Heart right ventricle (tissue), 16 donors: ENCODE measurements at regions of chr20 and their contacts with region 1.

Region 1: GRCh38 chr20:40962730-40963504 is 65.7 kb upstream of the TOP1 start:
- DNase-seq: peak; percentile 62 to 65
- ATAC-seq: peak; percentile 77 to 89 (median 84)
- H3K4me3 ChIP-seq: no peak overlapping the region
- H3K27ac ChIP-seq: no peak overlapping the region
- H3K4me1 ChIP-seq: peaks cover 0 to 15% (median 0%) of the 10 kb centered on the region in 9 donors
- H3K27me3 ChIP-seq: peaks cover 0 to 4% (median 0%) of the 10 kb centered on the region in 7 donors
- CTCF ChIP-seq: peak; percentile 82 to 96 (median 92)

Region 2: DNA sequence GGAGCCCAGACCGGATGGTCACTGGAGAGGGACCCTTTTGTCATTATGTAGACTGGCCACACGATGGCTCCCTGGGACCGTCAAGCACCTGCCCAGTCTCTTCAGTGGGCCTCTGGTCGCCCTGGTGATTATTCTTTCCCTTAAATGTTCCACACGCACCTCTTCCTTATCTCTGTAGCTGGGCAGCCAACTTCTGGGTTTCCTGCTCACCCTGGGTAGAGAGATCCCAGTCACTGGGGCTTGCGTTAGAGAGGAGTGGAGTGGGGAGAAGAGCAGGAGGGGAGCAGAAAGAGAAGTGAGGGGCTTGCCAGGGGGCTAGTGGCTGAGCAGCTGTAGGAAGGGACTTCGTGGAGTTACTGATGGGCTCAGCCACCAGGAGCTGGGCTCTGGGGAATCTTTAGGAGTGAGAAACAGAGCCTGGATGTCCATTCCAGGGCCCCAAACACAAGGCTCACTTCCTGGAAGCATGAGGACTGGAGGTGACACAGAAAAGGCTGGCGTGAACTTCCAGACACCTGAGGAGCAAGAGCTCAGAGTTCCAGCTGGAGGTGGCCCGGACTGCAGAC is 1850.7 kb before region 1 on chr20:
- intact Hi-C with region 1: loop called in 6 of 10 experiments (anchors 2 to 10 kb)
- DNase-seq: peak; percentile 24 to 40
- ATAC-seq: peak; percentile 64 to 90 (median 88)
- H3K4me3 ChIP-seq: no peak overlapping the region
- H3K27ac ChIP-seq: no peak overlapping the region
- H3K4me1 ChIP-seq: peaks cover 0 to 9% (median 0%) of the 10 kb centered on the region in 9 donors
- H3K27me3 ChIP-seq: peaks cover 0 to 53% (median 28%) of the 10 kb centered on the region in 7 donors
- CTCF ChIP-seq: peak; percentile 31 to 74 (median 64)

Region 3: GRCh38 chr20:39880887-39881286 is 1082.0 kb before region 1 on chr20:
- intact Hi-C with region 1: loop called in 6 of 10 experiments (anchors 5 to 10 kb)
- DNase-seq: no peak
- ATAC-seq: no peak
- H3K4me3 ChIP-seq: no peak overlapping the region
- H3K27ac ChIP-seq: no peak overlapping the region
- H3K4me1 ChIP-seq: peaks cover 0 to under 1% (median 0%) of the 10 kb centered on the region in 9 donors
- H3K27me3 ChIP-seq: peaks cover 0 to 23% (median 0%) of the 10 kb centered on the region in 7 donors
- CTCF ChIP-seq: no peak

Region 4: GRCh38 chr20:40741507-40742106 is 221.3 kb before region 1 on chr20:
- intact Hi-C with region 1: loop called in 6 of 10 experiments (anchors 5 to 10 kb)
- DNase-seq: peak; percentile 27
- ATAC-seq: peak in 2 of 8 donors; percentile 61 to 70
- H3K4me3 ChIP-seq: no peak overlapping the region
- H3K27ac ChIP-seq: no peak overlapping the region
- H3K4me1 ChIP-seq: no peaks in the 10 kb centered on the region
- H3K27me3 ChIP-seq: peaks cover 0 to 15% (median 7%) of the 10 kb centered on the region in 7 donors
- CTCF ChIP-seq: peak in 8 of 9 donors; percentile 18 to 73 (median 63)

Region 5: DNA sequence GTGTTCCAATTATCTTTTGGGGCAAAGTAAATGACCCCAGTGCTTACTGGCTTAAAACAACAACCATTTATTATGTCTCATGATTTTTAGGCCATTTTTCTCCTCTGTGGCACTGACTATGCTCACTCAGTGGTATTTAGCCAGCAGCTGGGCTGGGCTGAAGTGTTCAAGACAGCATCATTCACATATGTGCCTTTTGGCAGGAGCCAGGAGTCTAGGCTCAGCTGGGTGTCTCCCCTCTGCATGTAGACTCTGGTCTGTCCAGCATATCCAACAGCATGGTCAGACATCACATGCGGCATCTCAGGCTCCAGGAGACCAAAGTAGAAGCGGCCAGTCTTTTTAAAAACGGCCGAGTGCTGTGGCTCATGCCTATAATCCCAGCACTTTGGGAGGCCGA is 54.6 kb before region 1 on chr20:
- intact Hi-C with region 1: no loop called
- DNase-seq: no peak
- ATAC-seq: no peak
- H3K4me3 ChIP-seq: no peak overlapping the region
- H3K27ac ChIP-seq: no peak overlapping the region
- H3K4me1 ChIP-seq: no peaks in the 10 kb centered on the region
- H3K27me3 ChIP-seq: no peaks in the 10 kb centered on the region
- CTCF ChIP-seq: no peak

Region 6: GRCh38 chr20:41173161-41173721 is 210.3 kb after region 1 on chr20:
- intact Hi-C with region 1: loop called in 1 of 10 experiments (anchors 5 kb)
- DNase-seq: peak; percentile 89 to 90
- ATAC-seq: peak; percentile 79 to 89 (median 85)
- H3K4me3 ChIP-seq: peak overlapping the region in 1 of 10 donors; percentile 0
- H3K27ac ChIP-seq: peak overlapping the region; percentile 66 to 93 (median 85)
- H3K4me1 ChIP-seq: peaks cover 30 to 72% (median 62%) of the 10 kb centered on the region in 9 donors
- H3K27me3 ChIP-seq: no peaks in the 10 kb centered on the region
- CTCF ChIP-seq: peak; percentile 94 to 99 (median 98)